HAP-1 (cell line): ENCODE measurements at regions of chr4 and their contacts with region 1.

Region 1: GRCh38 chr4:44629280-44629866 is 22.1 kb downstream of the YIPF7 start:
- DNase-seq: peak; percentile 53 to 64
- H3K4me3 ChIP-seq: no peak overlapping the region
- H3K4me1 ChIP-seq: no peaks in the 10 kb centered on the region
- H3K27me3 ChIP-seq: peaks cover 9% of the 10 kb centered on the region

Region 2: GRCh38 chr4:44448548-44449461 is 180.6 kb before region 1 on chr4 and contains the start of gene KCTD8:
- in situ Hi-C with region 1: loop called (anchors 25 kb)
- DNase-seq: peak; percentile 88 to 93
- H3K4me3 ChIP-seq: peak within 1 kb of the TSS; percentile 33
- H3K4me1 ChIP-seq: peaks cover 6% of the 10 kb centered on the region
- H3K27me3 ChIP-seq: peaks cover 13% of the 10 kb centered on the region

Region 3: GRCh38 chr4:45131020-45131419 is 501.6 kb after region 1 on chr4:
- in situ Hi-C with region 1: no loop called
- DNase-seq: no peak
- H3K4me3 ChIP-seq: no peak overlapping the region
- H3K4me1 ChIP-seq: no peaks in the 10 kb centered on the region
- H3K27me3 ChIP-seq: no peaks in the 10 kb centered on the region